IMR-90 (cell line): ENCODE measurements at regions of chr6 and their contacts with region 1.

Region 1: GRCh38 chr6:79034865-79035264 is 43.2 kb downstream of the PHIP start:
- DNase-seq: peak; percentile 14
- ATAC-seq: no peak
- H3K4me3 ChIP-seq: no peak overlapping the region
- H3K27ac ChIP-seq: no peak overlapping the region
- H3K4me1 ChIP-seq: peaks cover 4% of the 10 kb centered on the region
- H3K27me3 ChIP-seq: no peaks in the 10 kb centered on the region
- CTCF ChIP-seq: no peak
- POLR2A ChIP-seq: no peak
- RAD21 ChIP-seq: no peak

Region 2: DNA sequence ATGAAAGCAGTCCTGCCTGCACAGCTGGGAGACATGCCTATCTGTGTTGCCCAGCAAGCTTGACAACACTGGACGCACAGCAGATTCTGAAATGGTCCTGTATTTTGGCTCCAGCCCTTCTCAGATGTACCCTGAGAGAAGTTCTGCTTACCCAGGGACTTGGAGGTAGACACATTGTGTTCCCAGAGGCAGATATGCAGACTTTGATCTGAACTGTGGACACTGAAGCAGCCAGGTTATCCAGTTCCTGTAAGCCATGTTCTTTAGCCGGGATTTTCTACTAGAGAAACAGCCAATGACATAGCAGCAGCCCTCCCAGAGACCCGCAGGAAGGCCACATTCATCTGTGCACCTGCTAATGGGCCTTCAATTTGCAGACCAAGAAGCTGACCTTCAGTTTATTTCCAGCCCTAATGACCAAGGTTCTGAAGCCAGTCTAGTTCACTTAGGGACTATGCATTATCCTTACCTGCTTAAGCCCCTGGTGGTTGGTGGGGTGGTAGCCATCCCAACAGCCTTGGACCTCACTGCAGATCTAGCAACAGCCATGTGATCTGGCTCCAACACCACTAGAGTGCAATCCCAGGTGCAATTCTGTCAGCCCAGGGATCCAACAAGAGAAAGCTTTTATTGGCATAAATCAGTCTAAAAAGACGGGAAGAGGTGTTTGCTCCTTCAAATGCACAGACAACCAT is 1247.8 kb before region 1 on chr6:
- CTCF ChIA-PET with region 1: no interaction called
- POLR2A ChIA-PET with region 1: no interaction called
- dilution Hi-C with region 1: no loop called
- in situ Hi-C with region 1: no loop called
- intact Hi-C with region 1: no loop called
- DNase-seq: no peak
- ATAC-seq: no peak
- H3K4me3 ChIP-seq: no peak overlapping the region
- H3K27ac ChIP-seq: no peak overlapping the region
- H3K4me1 ChIP-seq: no peaks in the 10 kb centered on the region
- H3K27me3 ChIP-seq: no peaks in the 10 kb centered on the region
- CTCF ChIP-seq: no peak
- POLR2A ChIP-seq: no peak
- RAD21 ChIP-seq: no peak

Region 3: GRCh38 chr6:78984225-78984950 is 50.5 kb before region 1 on chr6:
- CTCF ChIA-PET with region 1: no interaction called
- POLR2A ChIA-PET with region 1: no interaction called
- dilution Hi-C with region 1: no loop called
- in situ Hi-C with region 1: no loop called
- intact Hi-C with region 1: no loop called
- DNase-seq: no peak
- ATAC-seq: no peak
- H3K4me3 ChIP-seq: no peak overlapping the region
- H3K27ac ChIP-seq: no peak overlapping the region
- H3K4me1 ChIP-seq: no peaks in the 10 kb centered on the region
- H3K27me3 ChIP-seq: no peaks in the 10 kb centered on the region
- CTCF ChIP-seq: no peak
- POLR2A ChIP-seq: no peak
- RAD21 ChIP-seq: no peak

Region 4: DNA sequence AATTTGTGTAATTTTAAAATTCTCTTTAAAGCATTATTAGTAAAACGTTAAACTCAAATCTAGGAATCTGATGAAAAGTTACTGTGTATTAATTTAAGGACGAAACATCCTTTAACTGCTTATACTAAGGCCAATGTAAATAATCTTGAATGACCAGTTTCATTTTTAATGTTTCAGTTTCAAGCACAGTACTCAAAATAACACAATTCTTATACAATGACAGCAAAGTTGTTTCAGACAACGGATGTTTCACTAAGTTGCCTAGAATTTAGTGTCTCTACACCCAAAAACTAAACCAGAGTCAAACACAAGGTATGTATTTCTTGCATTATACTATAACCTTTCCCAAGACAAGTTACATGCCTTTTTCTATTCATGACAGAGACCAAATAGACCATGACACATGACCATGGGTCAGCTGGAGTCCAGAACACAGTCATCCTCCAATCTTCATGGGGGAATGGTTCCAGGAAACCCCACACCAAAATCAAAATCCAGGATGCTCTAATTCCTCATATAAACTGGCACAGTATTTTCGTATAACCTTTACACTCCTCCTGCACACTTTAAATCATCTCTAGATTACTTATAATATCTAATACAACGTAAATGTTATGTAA is 35.5 kb after region 1 on chr6:
- CTCF ChIA-PET with region 1: no interaction called
- POLR2A ChIA-PET with region 1: no interaction called
- dilution Hi-C with region 1: no loop called
- in situ Hi-C with region 1: no loop called
- intact Hi-C with region 1: loop called (anchors 5 kb)
- DNase-seq: peak; percentile 26
- ATAC-seq: peak; percentile 40
- H3K4me3 ChIP-seq: no peak overlapping the region
- H3K27ac ChIP-seq: no peak overlapping the region
- H3K4me1 ChIP-seq: peaks cover 8% of the 10 kb centered on the region
- H3K27me3 ChIP-seq: no peaks in the 10 kb centered on the region
- CTCF ChIP-seq: no peak
- POLR2A ChIP-seq: no peak
- RAD21 ChIP-seq: no peak